Heart left ventricle (tissue), 16 donors: ENCODE measurements at regions of chr15 and their contacts with region 1.

Region 1: DNA sequence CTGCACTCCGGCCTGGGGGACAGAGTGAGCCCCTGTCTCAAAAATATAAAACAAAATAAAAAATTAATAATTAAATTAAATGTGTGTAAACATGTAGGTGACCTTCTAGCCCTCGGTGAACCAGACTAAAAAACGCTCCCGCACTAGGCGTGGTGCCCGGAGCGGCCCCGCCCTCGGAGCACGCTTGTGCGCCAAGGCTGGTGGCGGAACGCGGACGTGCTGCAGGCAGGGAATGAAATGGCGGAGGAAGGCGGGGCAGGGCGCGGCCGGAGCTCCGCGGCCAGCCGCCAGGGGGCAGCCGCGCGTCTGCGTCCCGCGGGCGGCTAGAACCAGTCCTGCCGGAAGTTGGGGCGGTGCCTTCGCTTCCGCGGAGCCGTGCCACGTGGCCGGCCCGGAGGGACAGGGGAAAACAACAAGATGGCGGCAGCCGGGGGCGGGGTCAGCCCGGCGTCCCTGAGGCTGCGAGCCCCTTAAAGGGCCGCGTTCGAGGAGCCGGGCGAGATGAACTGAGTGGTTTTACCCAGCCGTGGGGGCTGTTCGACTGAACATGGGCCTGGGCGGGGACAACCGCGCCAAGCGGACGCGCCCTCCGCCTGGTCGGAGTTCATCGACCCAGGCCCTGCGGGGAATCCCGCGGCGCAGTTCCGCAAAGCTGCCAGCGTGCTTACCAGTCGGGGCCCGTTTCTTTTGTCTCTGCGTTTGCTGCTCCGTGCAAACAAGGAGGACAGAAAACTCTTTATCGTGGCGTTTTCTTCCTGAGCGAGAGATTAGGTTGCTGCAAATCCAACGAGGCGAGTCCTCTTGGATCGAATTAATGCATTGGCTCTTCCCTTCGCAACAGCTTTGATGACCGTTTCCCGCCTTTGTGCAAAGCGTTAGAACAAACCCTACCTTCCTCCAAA is 90.9 kb upstream of the CHD2 start:
- DNase-seq: peak; percentile 98 to 99 (median 99)
- ATAC-seq: peak; percentile 88 to 95 (median 91)
- H3K4me3 ChIP-seq: peak overlapping the region; percentile 34 to 80 (median 61)
- H3K27ac ChIP-seq: peak overlapping the region; percentile 90 to 100 (median 98)
- H3K4me1 ChIP-seq: peaks cover 3 to 68% (median 19%) of the 10 kb centered on the region in 12 donors
- H3K27me3 ChIP-seq: no peaks in the 10 kb centered on the region
- CTCF ChIP-seq: peak; percentile 96 to 100 (median 99)
- POLR2A ChIP-seq: peak in 1 of 2 donors; percentile 75

Region 2: GRCh38 chr15:92438471-92438870 is 370.8 kb before region 1 on chr15:
- intact Hi-C with region 1: no loop called
- DNase-seq: no peak
- ATAC-seq: no peak
- H3K4me3 ChIP-seq: no peak overlapping the region
- H3K27ac ChIP-seq: no peak overlapping the region
- H3K4me1 ChIP-seq: no peaks in the 10 kb centered on the region
- H3K27me3 ChIP-seq: peaks cover 0 to 6% (median 0%) of the 10 kb centered on the region in 9 donors
- CTCF ChIP-seq: no peak
- POLR2A ChIP-seq: no peak

Region 3: DNA sequence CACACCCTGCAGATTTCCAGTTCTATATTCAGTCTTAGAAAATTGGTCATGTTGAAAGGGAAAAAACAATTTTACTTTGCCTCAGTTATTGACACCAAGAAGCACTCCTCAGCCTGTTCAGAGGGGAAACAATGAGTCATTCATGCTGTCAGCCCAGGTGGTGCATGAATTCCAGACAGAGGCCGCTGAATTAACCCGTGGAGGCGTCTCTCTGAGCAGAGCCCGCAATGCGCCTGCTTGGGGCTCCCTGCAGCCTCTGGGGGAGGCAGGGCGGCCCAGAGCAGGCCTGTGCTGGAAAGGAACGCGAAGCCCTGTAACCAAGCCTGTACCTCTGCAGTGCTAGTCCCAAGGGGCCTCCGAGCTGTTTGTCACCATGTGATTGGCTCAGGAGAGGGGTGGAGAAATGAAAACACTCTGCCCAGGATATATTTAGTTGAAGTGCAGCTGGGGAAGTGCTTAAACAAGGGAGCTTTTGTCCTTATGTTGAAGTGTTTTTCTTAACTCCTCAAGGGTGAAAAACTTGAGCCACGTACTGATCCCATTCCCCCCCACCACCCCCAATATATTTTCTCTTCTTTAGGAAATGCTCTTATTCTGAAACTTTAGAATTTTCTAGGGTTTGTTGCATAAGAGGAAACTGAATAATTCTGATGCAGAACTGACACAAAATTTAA is 22.6 kb after region 1 on chr15:
- intact Hi-C with region 1: loop called in 3 of 10 experiments (anchors 1 to 2 kb)
- DNase-seq: peak; percentile 94 to 99 (median 96)
- ATAC-seq: peak; percentile 98 to 99 (median 98)
- H3K4me3 ChIP-seq: peak overlapping the region in 11 of 12 donors; percentile 12 to 49 (median 37)
- H3K27ac ChIP-seq: peak overlapping the region; percentile 89 to 98 (median 95)
- H3K4me1 ChIP-seq: peaks cover 12 to 53% (median 33%) of the 10 kb centered on the region in 12 donors
- H3K27me3 ChIP-seq: no peaks in the 10 kb centered on the region
- CTCF ChIP-seq: no peak
- POLR2A ChIP-seq: peak; percentile 56 to 95

Region 4: DNA sequence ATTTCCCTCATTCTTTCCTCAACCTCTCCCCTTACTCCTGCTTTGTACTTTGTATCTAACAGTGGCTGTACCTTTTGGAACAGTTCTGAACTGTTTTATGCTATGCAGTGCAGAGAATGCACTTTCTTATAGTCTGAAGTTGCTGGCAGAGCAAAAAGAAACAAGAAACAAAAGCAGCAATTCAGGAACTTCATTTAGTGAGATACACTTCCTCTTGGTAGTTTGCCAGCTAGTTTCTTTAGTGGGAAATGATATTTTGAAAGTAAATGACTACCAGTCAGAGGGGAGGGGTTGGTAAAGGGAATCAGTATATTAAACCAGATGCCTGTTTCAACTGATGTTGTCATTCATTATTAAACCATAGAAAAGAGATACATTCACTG is 35.9 kb after region 1 on chr15:
- intact Hi-C with region 1: no loop called
- DNase-seq: no peak
- ATAC-seq: peak; percentile 51 to 71 (median 61)
- H3K4me3 ChIP-seq: peak overlapping the region in 1 of 12 donors; percentile 21
- H3K27ac ChIP-seq: peak overlapping the region in 3 of 12 donors; percentile 4 to 88 (median 4)
- H3K4me1 ChIP-seq: peaks cover 0 to 43% (median 9%) of the 10 kb centered on the region in 12 donors
- H3K27me3 ChIP-seq: no peaks in the 10 kb centered on the region
- CTCF ChIP-seq: no peak
- POLR2A ChIP-seq: no peak

Region 5: DNA sequence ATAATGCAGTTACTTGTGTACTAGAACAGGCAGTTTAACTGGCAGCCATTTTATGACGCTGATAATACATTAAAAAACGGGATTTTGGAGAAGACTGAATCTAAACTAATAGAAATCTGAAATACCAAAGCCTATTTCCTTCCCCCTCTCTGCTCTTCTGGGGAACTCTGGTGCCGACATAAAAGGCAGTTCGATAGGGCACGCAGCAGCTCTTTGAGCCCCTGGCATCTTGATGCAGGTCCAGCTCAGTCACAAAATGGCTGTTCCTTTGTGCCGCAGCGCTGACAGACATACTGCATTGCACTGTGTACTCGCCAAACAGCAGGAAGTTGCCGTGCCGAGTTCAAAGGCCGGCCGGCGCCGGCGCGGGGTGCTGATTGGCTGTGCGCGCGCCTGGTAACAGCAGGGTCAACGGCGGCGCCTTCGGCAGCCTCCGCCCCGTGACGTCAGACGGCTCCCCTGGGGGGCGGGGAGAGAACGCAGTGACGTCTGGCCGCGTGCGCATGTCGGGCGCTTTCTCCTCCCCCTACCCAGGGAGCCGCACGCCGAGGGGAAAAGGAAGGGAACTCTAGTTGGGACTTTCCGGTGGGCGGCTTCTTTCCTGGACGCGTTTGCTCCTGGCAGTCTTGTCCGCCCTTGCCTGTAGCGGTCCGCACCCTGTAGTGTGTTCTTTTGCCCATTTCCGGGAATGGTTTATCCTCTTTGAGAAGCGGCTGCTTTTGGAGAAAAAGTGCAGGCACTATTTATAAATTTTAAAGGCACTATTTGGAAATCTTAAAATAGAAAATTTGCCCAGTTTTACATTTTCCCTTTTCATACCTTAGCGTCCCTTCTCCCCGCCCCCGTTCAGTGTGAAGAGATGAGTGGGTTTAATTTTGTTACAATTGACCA is 95.0 kb after region 1 on chr15:
- intact Hi-C with region 1: loop called in 6 of 10 experiments (anchors 1 to 5 kb)
- DNase-seq: peak; percentile 99 to 100 (median 99)
- ATAC-seq: peak; percentile 92 to 96 (median 94)
- H3K4me3 ChIP-seq: peak overlapping the region; percentile 32 to 75 (median 63)
- H3K27ac ChIP-seq: peak overlapping the region; percentile 92 to 99 (median 94)
- H3K4me1 ChIP-seq: peaks cover 19 to 77% (median 57%) of the 10 kb centered on the region in 12 donors
- H3K27me3 ChIP-seq: no peaks in the 10 kb centered on the region
- CTCF ChIP-seq: no peak
- POLR2A ChIP-seq: peak in 1 of 2 donors; percentile 92

Region 6: GRCh38 chr15:92917606-92918407 is 108.6 kb after region 1 on chr15:
- intact Hi-C with region 1: loop called in 9 of 10 experiments (anchors 1 to 2 kb)
- DNase-seq: peak; percentile 90 to 95 (median 94)
- ATAC-seq: peak; percentile 40 to 74 (median 68)
- H3K4me3 ChIP-seq: peak overlapping the region in 7 of 12 donors; percentile 2 to 48 (median 24)
- H3K27ac ChIP-seq: peak overlapping the region; percentile 69 to 99 (median 84)
- H3K4me1 ChIP-seq: peaks cover 3 to 100% (median 79%) of the 10 kb centered on the region in 12 donors
- H3K27me3 ChIP-seq: no peaks in the 10 kb centered on the region
- CTCF ChIP-seq: peak; percentile 87 to 96 (median 92)
- POLR2A ChIP-seq: peak in 1 of 2 donors; percentile 32

Region 7: DNA sequence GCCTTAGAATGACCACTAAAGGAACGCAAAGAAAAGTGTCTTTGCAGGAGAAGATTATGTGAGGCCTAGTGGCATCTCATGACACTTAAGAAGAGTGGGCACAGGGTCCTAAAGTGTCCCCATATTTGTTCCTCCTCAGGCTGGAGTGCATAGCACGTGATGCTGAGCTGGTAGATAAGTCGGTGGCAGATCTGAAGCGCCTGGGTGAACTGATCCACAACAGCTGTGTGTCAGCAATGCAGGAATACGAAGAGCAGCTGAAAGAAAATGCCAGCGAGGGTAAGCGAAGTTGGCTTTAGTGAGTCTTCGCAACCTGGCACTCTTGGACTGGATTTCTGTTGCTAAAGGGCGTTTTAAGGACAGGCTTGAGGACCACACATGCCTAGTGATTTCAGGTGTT is 183.5 kb after region 1 on chr15:
- intact Hi-C with region 1: loop called in 1 of 10 experiments (anchors 10 kb)
- DNase-seq: peak in 3 of 5 donors; percentile 16 to 38 (median 35)
- ATAC-seq: peak; percentile 70 to 90 (median 84)
- H3K4me3 ChIP-seq: no peak overlapping the region
- H3K27ac ChIP-seq: peak overlapping the region in 7 of 12 donors; percentile 1 to 59 (median 20)
- H3K4me1 ChIP-seq: peaks cover 0 to 10% (median 0%) of the 10 kb centered on the region in 12 donors
- H3K27me3 ChIP-seq: no peaks in the 10 kb centered on the region
- CTCF ChIP-seq: no peak
- POLR2A ChIP-seq: no peak

Region 8: GRCh38 chr15:94042180-94042928 is 1233.1 kb after region 1 on chr15:
- intact Hi-C with region 1: no loop called
- DNase-seq: no peak
- ATAC-seq: peak in 1 of 4 donors; percentile 42
- H3K4me3 ChIP-seq: no peak overlapping the region
- H3K27ac ChIP-seq: peak overlapping the region in 1 of 12 donors; percentile 34
- H3K4me1 ChIP-seq: no peaks in the 10 kb centered on the region
- H3K27me3 ChIP-seq: no peaks in the 10 kb centered on the region
- CTCF ChIP-seq: no peak
- POLR2A ChIP-seq: no peak